ENCODE measurements at regions of chr13 and their contacts with region 1.

Region 1: GRCh38 chr13:91381371-91381770 is 17.1 kb upstream of the GPC5 start:
- DNase-seq: no peak

Region 2: DNA sequence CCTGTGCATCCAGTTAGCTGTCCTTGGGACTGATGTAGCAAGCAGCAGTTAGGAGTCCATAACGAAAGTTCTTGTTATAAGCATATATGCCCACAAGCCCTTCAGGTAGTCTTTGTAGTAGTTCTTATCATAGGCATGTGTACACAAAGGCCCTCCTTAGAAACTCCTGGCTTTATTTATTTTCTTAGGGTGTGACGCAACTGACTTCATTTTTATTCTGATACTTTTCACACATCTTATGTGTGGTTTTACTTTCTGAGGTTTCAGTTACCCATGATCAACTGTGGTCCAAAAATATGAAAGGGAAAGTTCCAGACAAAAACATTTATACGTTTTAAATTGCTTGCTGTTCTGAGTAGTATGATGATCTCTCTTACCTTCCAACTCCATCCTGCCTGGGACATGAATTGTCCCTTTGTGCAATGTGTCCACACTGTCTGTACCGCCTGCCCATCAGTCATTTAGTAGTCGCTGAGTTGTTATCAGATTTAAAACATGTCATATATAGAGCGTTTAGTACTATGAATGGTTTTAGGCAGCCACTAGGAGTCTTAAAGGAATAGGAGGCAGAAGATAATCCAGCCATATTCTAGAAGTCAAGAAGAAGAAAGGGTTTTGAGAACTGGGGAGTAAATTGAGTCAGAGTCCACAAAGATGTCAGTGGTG is 36.4 kb after region 1 on chr13:
- intact Hi-C with region 1: no loop called
- DNase-seq: no peak

Region 3: DNA sequence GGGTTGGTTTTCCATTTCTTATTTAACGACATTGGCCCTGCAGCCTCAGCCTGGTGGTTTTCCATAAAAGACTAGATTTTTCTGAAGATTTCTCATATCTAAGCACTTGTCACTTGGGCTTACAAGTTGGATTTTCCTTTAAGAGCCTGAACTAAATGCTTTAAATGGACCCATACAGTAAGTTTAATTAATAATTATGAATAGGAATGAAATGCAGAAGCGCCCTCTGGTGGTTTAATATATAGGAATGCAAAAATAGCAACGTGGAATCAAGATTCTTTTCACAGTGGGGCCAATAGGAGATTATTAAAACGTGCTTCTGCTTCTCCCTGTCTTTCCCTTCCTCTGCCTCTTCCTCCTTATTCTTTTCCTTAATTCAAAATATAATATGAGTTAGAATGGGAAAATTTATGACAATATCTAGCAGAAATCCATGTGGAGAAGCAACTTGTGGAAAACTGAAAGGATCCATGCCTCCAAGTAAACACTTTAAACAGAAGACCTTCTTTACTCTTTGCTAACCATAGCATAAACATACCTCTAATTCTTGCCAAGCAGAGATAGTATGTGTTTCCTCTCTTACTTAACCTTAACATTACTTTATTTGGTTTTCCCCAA is 341.0 kb after region 1 on chr13:
- intact Hi-C with region 1: loop called (anchors 10 kb)
- DNase-seq: no peak